Activated CD4-positive, alpha-beta T cell treated with anti-CD3 and anti-CD28 coated beads for 36 hours (primary cell): ENCODE measurements at regions of chr14 and their contacts with region 1.

Region 1: GRCh38 chr14:99271951-99272631 is at the start of gene BCL11B:
- DNase-seq: peak; percentile 95
- ATAC-seq: peak; percentile 76
- H3K4me3 Mint-ChIP-seq: peak within 1 kb of the TSS; percentile 87
- H3K27ac Mint-ChIP-seq: peak within 1 kb of the TSS; percentile 98
- H3K4me1 Mint-ChIP-seq: peaks cover 32% of the 10 kb centered on the region
- H3K27me3 Mint-ChIP-seq: peaks cover 2% of the 10 kb centered on the region
- total RNA-seq, gene BCL11B: 62.1 to 66.2 TPM

Region 2: GRCh38 chr14:97458661-97459579 is 1813.2 kb before region 1 on chr14:
- CTCF ChIA-PET with region 1: no interaction called
- POLR2A ChIA-PET with region 1: no interaction called
- intact Hi-C with region 1: loop called in 1 of 2 experiments (anchors 2 kb)
- DNase-seq: peak; percentile 89
- ATAC-seq: peak; percentile 81
- H3K4me3 Mint-ChIP-seq: peak overlapping the region; percentile 87
- H3K27ac Mint-ChIP-seq: peak overlapping the region; percentile 98
- H3K4me1 Mint-ChIP-seq: peaks cover 41% of the 10 kb centered on the region
- H3K27me3 Mint-ChIP-seq: no peaks in the 10 kb centered on the region

Region 3: DNA sequence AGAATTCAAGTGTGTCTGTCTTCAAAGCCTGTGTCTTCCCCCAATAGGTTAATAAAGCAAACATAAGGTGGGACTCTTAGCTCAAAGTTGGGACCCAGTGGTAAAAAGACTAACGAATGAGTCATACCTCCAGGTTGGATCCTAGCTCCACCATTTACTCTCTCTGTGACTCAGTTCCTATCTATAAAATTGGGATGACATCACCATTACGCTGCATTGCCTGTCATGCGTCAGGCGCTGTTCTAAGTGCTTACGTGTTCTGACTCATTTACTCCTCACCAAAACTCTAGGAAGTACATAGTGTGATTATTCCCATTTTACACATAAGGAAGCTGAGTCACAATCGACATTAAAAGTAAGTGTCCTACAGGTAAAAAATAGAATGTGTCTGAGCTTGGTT is 1559.1 kb before region 1 on chr14:
- CTCF ChIA-PET with region 1: no interaction called
- POLR2A ChIA-PET with region 1: no interaction called
- intact Hi-C with region 1: loop called (anchors 5 to 10 kb)
- DNase-seq: peak; percentile 63
- ATAC-seq: peak; percentile 94
- H3K4me3 Mint-ChIP-seq: no peak overlapping the region
- H3K27ac Mint-ChIP-seq: peak overlapping the region; percentile 67
- H3K4me1 Mint-ChIP-seq: peaks cover 60% of the 10 kb centered on the region
- H3K27me3 Mint-ChIP-seq: no peaks in the 10 kb centered on the region

Region 4: DNA sequence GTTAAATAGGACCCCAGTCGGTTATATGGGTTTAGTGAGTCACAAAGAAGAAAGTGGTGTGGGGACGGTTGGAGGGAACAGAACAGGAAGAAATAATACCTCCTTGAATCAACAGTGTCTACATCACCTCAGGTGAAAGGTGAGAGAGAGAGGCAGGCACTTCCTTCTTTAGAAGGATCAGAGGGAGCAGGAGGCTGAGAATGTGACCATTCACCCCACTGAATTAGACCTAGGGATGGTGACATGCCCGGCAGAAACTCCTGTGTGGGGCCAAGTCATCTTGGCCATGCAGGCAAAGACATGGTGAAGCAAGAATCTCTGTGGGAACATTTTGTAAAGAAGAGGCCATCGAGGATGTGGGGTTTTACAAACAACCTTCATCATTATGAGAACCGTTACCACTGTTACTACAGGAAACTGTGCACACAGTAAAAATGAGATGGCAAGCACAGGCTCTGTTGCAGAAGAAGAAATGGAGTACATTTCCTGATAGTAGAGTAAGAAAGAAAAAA is 1278.0 kb before region 1 on chr14:
- CTCF ChIA-PET with region 1: no interaction called
- POLR2A ChIA-PET with region 1: no interaction called
- intact Hi-C with region 1: loop called in 1 of 2 experiments (anchors 5 kb)
- DNase-seq: peak; percentile 52
- ATAC-seq: peak; percentile 81
- H3K4me3 Mint-ChIP-seq: peak overlapping the region; percentile 18
- H3K27ac Mint-ChIP-seq: peak overlapping the region; percentile 94
- H3K4me1 Mint-ChIP-seq: peaks cover 71% of the 10 kb centered on the region
- H3K27me3 Mint-ChIP-seq: no peaks in the 10 kb centered on the region

Region 5: GRCh38 chr14:98218218-98218617 is 1053.9 kb before region 1 on chr14:
- CTCF ChIA-PET with region 1: no interaction called
- POLR2A ChIA-PET with region 1: no interaction called
- intact Hi-C with region 1: loop called in 1 of 2 experiments (anchors 5 kb)
- DNase-seq: no peak
- ATAC-seq: no peak
- H3K4me3 Mint-ChIP-seq: no peak overlapping the region
- H3K27ac Mint-ChIP-seq: no peak overlapping the region
- H3K4me1 Mint-ChIP-seq: peaks cover 37% of the 10 kb centered on the region
- H3K27me3 Mint-ChIP-seq: no peaks in the 10 kb centered on the region

Region 6: GRCh38 chr14:99480917-99481744 is 209.0 kb after region 1 on chr14 and contains the start of gene CCNK:
- CTCF ChIA-PET with region 1: interaction called, 3 read pairs
- POLR2A ChIA-PET with region 1: interaction called, 3 read pairs
- intact Hi-C with region 1: loop called in 1 of 2 experiments (anchors 1 kb)
- DNase-seq: peak; percentile 100
- ATAC-seq: peak; percentile 95
- H3K4me3 Mint-ChIP-seq: peak within 1 kb of the TSS; percentile 97
- H3K27ac Mint-ChIP-seq: peak within 1 kb of the TSS; percentile 96
- H3K4me1 Mint-ChIP-seq: peaks cover 58% of the 10 kb centered on the region
- H3K27me3 Mint-ChIP-seq: no peaks in the 10 kb centered on the region
- total RNA-seq, gene CCNK: 93.7 to 96.2 TPM